OCI-LY7 (cell line): ENCODE measurements at regions of chr19 and their contacts with region 1.

Region 1: DNA sequence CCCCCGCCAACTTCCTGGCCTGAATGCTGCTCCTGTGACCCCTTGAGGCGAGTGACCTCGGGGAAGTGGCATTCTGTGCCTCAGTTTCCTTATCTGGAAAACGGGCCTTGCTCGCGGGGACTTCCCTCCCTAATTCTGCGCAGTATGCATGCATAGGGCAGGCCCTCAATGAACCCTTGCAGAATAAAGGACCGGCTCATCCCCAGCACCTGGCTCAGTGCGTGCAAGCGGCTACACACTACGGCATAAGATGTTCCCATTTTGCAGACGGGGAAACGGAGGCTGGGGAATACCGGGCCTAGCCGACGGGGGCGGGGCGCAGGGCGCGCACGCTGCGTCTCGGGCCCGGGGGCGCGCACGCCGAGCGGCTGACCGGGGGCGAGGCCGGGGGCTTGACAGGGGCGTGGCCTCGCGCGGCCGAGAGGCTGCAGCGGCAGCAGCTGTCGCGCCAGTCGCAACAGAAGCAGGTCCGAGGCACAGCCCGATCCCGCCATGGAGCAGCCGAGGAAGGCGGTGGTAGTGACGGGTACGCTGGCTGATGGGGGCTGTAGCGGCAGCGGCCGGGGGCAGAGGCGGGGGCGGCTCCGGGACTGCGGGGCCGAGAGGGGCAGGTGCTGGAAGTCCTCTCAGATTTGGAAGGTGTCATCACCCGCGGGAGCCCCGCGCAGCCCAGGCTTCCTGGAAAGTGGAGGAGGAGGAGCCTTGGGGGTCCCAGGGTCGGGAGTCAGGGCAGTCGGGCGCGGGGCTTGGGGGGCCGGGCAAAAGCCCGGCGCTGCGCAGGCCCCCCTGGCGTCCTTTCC is at the start of gene PGPEP1:
- DNase-seq: peak; percentile 81
- H3K4me3 ChIP-seq: peak within 1 kb of the TSS; percentile 88
- H3K27ac ChIP-seq: peak within 1 kb of the TSS; percentile 56
- H3K4me1 ChIP-seq: peaks cover 25% of the 10 kb centered on the region
- CTCF ChIP-seq: no peak
- total RNA-seq, gene PGPEP1: 15.2 and 18.9 TPM in 2 replicates

Region 2: DNA sequence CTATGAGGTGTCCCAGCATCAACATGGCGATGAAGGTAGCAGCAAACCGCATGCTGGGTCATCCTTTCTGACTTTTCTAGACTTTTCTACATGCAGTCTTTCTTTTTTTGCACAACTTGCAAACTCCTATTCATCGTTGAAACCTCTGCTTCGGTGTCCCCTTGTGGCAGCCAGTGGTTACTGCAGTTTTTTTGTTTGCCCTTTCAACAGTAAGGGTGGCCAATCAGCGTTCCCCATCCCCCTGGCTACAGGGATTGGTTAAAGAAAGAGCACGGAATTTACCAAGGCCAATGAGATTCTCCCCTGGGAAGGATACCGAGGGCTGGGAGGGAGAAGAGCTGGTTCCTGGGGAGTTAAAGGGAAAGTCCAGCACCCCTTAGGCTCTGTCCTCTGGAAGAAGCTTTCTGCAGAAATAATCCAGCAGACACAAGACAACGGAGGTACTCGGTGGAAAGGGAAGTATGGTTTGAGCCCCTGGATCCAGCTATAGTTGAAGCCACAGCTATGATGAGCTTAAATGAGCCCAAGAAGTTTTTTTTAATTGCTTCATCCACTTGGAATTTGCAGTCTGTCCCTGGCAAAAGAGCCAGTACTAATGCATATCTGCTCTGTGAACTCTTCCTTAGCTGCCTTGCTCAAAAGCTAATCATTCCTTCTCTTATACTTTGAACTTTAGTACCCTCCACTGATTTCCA is 11.9 kb before region 1 on chr19:
- CTCF ChIA-PET with region 1: interaction called, 10 read pairs
- POLR2A ChIA-PET with region 1: interaction called, 19 read pairs
- intact Hi-C with region 1: no loop called
- DNase-seq: peak; percentile 94
- H3K4me3 ChIP-seq: peak overlapping the region; percentile 56
- H3K27ac ChIP-seq: no peak overlapping the region
- H3K4me1 ChIP-seq: peaks cover 32% of the 10 kb centered on the region
- CTCF ChIP-seq: peak; percentile 90